ENCODE measurements at regions of chr12 and their contacts with region 1.

Region 1: GRCh38 chr12:19739183-19739776 is 300.0 kb downstream of the AEBP2 start:
- DNase-seq: peak in 4 of 5 donors; percentile 22 to 35 (median 31)
- H3K4me3 ChIP-seq: no peak overlapping the region
- H3K4me3 Mint-ChIP-seq: no peak overlapping the region
- H3K27ac ChIP-seq: no peak overlapping the region
- H3K27ac Mint-ChIP-seq: no peak overlapping the region
- H3K4me1 ChIP-seq: no peaks in the 10 kb centered on the region
- H3K4me1 Mint-ChIP-seq: no peaks in the 10 kb centered on the region
- H3K27me3 ChIP-seq: no peaks in the 10 kb centered on the region
- H3K27me3 Mint-ChIP-seq: no peaks in the 10 kb centered on the region

Region 2: DNA sequence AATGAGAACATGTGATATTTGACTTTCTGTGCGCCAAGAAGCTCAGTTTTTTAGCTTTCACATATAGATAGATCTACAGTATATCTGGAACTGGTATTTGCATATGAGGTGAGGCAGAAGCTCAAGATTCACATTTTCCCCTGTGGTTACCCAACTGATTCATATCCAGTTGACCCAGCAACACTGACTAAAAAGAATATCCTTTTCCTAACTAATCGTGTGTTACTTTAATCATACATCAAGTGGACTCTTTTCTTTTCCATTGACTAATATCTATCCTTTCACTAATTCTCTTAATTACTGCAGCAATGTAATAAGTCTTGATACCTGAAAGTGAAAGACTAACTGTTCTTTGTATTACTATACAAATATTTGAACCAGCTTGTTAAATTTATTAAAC is 63.9 kb before region 1 on chr12:
- CTCF ChIA-PET with region 1: no interaction called
- POLR2A ChIA-PET with region 1: no interaction called
- intact Hi-C with region 1: no loop called
- DNase-seq: no peak
- H3K4me3 ChIP-seq: no peak overlapping the region
- H3K4me3 Mint-ChIP-seq: no peak overlapping the region
- H3K27ac ChIP-seq: no peak overlapping the region
- H3K27ac Mint-ChIP-seq: no peak overlapping the region
- H3K4me1 ChIP-seq: peaks cover 19% of the 10 kb centered on the region
- H3K4me1 Mint-ChIP-seq: peaks cover 22 to 32% (median 28%) of the 10 kb centered on the region in 4 donors
- H3K27me3 ChIP-seq: no peaks in the 10 kb centered on the region
- H3K27me3 Mint-ChIP-seq: no peaks in the 10 kb centered on the region

Region 3: DNA sequence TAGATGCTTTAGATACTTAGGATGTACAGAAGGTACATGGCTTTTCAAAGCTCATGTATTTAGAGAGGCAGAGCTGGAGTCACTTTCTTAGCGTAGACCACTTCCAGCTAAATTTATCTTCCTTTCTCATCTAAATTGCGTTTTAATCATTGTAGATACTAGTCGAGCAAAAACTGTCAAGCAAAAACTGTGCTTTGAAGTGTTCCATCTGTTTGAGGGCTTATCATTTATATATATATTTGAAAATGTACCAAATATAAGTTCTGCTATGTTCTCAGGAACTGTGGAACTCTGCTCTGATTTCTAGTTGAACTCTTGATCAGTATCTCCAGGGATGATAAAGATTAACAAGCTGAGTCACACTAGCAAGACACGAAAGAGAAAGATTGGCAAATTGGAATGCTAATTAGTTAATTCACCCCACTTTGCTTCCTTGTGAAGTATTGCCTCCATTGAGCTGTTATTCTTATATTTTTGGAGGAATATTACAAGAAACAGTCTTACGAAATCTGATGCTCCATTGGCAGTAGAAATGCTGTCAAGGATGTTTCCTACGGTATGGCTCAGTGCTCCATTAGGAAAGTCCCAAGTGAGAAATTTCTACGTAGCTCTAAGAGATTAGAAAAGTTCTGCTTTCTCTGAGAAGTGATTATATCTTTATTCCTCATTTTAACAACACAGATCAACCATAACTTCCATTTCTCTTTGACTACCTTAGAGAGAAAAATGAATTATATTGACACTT is 10.8 kb after region 1 on chr12:
- CTCF ChIA-PET with region 1: interaction called, 18 read pairs
- POLR2A ChIA-PET with region 1: no interaction called
- intact Hi-C with region 1: no loop called
- DNase-seq: no peak
- H3K4me3 ChIP-seq: no peak overlapping the region
- H3K4me3 Mint-ChIP-seq: no peak overlapping the region
- H3K27ac ChIP-seq: no peak overlapping the region
- H3K27ac Mint-ChIP-seq: no peak overlapping the region
- H3K4me1 ChIP-seq: no peaks in the 10 kb centered on the region
- H3K4me1 Mint-ChIP-seq: peaks cover 0 to under 1% (median under 1%) of the 10 kb centered on the region in 4 donors
- H3K27me3 ChIP-seq: no peaks in the 10 kb centered on the region
- H3K27me3 Mint-ChIP-seq: no peaks in the 10 kb centered on the region